PC-3 (cell line): ENCODE measurements at regions of chr22 and their contacts with region 1.

Region 1: GRCh38 chr22:44625981-44626687 is 75.9 kb upstream of the PRR5 start:
- DNase-seq: peak; percentile 70
- ATAC-seq: peak; percentile 65
- H3K4me3 ChIP-seq: no peak overlapping the region
- H3K27ac ChIP-seq: no peak overlapping the region
- H3K4me1 ChIP-seq: no peaks in the 10 kb centered on the region
- H3K27me3 ChIP-seq: no peaks in the 10 kb centered on the region
- CTCF ChIP-seq: peak; percentile 92

Region 2: DNA sequence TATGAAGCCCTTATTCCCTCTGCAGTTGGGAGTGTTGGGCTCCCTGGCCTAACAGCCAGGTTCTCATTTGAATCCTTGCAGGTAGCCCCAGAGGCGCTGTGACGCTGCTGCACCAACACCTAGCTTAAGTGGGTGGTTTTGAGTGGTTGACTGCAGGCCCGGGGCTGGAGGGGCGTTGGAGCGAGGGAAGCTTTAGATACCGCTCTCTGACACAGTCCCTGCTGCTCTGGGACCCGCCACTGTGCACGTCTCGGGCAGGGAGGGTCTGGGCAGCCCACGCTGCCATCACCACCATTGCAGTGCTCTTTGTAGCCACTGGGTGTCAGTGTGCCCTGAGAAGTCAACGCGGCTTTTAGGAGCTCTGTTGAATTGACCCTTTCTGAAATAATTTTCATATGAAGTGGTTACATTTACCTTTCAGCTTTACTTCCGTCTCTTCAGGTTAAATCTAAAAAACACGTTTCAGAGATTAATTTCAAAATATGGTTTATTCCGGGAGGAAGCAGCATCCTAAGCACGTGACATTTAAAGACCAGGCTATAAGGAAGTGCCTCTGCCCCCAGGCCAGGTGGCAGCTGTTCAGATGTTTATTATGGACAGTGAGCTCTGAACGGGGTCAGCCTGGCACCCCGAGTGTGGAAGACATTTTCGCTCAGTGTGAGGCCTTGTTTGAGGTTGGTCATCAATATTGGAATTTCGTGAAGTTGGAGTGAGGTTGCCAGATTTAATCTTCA is 632.9 kb before region 1 on chr22:
- CTCF ChIA-PET with region 1: interaction called, 7 read pairs
- POLR2A ChIA-PET with region 1: no interaction called
- intact Hi-C with region 1: loop called (anchors 2 kb)
- DNase-seq: peak; percentile 54
- ATAC-seq: peak; percentile 73
- H3K4me3 ChIP-seq: no peak overlapping the region
- H3K27ac ChIP-seq: no peak overlapping the region
- H3K4me1 ChIP-seq: peaks cover 14% of the 10 kb centered on the region
- H3K27me3 ChIP-seq: no peaks in the 10 kb centered on the region
- CTCF ChIP-seq: peak; percentile 92

Region 3: DNA sequence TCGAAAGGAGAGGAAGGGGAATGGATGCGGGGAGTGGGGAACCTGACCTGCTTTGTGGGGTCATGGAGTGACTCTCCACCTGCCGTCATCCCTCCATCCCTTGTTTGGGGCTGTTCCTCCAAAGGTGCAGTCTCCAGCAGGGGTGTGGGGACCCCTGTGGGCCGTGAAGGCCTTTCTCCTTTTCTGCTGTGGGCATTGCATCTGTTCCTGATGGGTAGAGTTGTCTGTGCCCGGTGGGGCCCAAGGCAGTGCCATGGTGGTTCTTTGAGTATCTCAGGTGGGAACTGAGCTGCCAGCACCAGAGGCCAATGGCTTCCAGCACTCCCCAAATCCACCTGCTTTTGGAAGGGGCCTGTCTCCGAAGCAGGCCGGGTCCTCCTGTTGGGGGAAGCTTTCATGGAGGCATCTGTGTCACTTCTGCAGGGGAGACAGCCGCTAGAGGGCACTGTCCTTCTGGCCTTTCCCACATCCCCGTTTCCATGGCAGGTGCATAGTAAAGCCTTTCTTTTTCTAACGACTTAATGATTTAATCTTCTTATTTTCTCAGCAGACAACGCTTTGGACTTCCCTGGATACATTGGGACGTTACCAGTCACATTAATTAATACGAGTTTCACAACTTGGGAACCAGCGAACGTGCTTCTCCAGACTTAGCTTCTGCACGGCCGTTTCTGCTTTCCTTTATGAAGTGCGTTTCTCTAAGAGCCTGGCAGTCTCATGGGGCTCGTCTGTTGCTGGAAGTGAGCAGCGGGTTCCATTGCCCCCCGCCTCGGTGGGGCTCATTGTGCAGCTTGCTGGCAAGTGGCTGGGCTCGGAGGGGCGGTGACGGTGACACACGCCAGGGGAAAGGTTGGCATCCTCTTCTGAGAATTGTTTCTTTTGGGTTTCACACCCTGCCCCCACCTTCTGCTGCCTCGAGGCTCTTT is 544.9 kb before region 1 on chr22:
- CTCF ChIA-PET with region 1: interaction called, 3 read pairs
- POLR2A ChIA-PET with region 1: no interaction called
- intact Hi-C with region 1: loop called (anchors 1 kb)
- DNase-seq: peak; percentile 58
- ATAC-seq: peak; percentile 51
- H3K4me3 ChIP-seq: no peak overlapping the region
- H3K27ac ChIP-seq: no peak overlapping the region
- H3K4me1 ChIP-seq: no peaks in the 10 kb centered on the region
- H3K27me3 ChIP-seq: no peaks in the 10 kb centered on the region
- CTCF ChIP-seq: peak; percentile 78

Region 4: GRCh38 chr22:44337678-44338004 is 288.5 kb before region 1 on chr22:
- CTCF ChIA-PET with region 1: no interaction called
- POLR2A ChIA-PET with region 1: no interaction called
- intact Hi-C with region 1: loop called (anchors 10 kb)
- DNase-seq: peak; percentile 56
- ATAC-seq: peak; percentile 69
- H3K4me3 ChIP-seq: no peak overlapping the region
- H3K27ac ChIP-seq: no peak overlapping the region
- H3K4me1 ChIP-seq: peaks cover 18% of the 10 kb centered on the region; the same call in 1 of the 2 replicates
- H3K27me3 ChIP-seq: no peaks in the 10 kb centered on the region
- CTCF ChIP-seq: no peak